ENCODE measurements at regions of chr6 and their contacts with region 1.

Region 1: DNA sequence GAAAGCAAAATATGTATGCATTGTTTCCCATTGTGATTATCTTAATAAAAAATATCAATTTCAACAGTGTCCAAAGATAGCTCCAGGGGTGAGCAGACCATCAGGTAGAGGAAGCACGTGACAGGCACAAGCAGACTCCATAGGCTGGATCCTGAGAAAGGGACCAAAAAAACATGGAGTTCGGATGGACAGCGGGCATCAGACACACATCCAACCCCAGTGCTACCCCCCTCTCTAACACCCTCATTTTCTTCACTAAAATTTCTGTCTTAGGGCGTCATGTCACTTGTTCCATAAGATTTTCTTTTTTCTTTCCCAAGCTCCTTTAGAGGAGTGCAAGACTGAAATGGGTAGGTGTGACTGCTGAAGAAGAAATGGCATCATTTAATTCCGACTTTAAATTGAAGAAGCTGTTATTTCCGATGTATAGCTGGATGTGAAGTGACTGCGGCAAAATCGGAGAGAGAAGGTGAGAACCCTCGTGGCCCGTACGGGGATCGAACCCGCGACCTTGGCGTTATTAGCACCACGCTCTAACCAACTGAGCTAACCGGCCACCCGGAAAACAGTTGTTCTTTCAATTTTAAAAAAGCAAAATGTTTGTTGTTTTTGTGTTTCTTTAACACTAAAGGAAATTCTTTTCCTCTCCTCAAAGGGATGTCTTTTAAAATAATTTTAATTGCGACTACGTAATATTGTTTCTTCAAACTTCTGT is 10.3 kb upstream of the PRSS16 start:
- DNase-seq: peak; percentile 83
- ATAC-seq: peak; percentile 60
- H3K4me3 Mint-ChIP-seq: peak overlapping the region; percentile 54
- H3K27ac Mint-ChIP-seq: no peak overlapping the region
- H3K4me1 Mint-ChIP-seq: peaks cover 24% of the 10 kb centered on the region
- H3K27me3 Mint-ChIP-seq: peaks cover 63% of the 10 kb centered on the region

Region 2: GRCh38 chr6:27280064-27280539 is 42.9 kb after region 1 on chr6:
- CTCF ChIA-PET with region 1: no interaction called
- POLR2A ChIA-PET with region 1: no interaction called
- intact Hi-C with region 1: loop called (anchors 2 to 5 kb)
- DNase-seq: peak; percentile 64
- ATAC-seq: peak; percentile 36
- H3K4me3 Mint-ChIP-seq: peak overlapping the region; percentile 58
- H3K27ac Mint-ChIP-seq: peak overlapping the region; percentile 13
- H3K4me1 Mint-ChIP-seq: peaks cover 10% of the 10 kb centered on the region
- H3K27me3 Mint-ChIP-seq: peaks cover 71% of the 10 kb centered on the region

Measured in activated CD4-positive, alpha-beta T cell treated with anti-CD3 and anti-CD28 coated beads for 36 hours (primary cell).